Adrenal gland (tissue), 19 donors: ENCODE measurements at regions of chr16 and their contacts with region 1.

Region 1: GRCh38 chr16:63361032-63361624 is 1324.9 kb upstream of the CDH8 start:
- DNase-seq: peak in 1 of 7 donors; percentile 10
- H3K4me3 ChIP-seq: no peak overlapping the region
- H3K27ac ChIP-seq: no peak overlapping the region
- H3K4me1 ChIP-seq: no peaks in the 10 kb centered on the region
- H3K27me3 ChIP-seq: no peaks in the 10 kb centered on the region
- CTCF ChIP-seq: peak; percentile 52 to 73 (median 59)
- POLR2A ChIP-seq: no peak

Region 2: GRCh38 chr16:63373744-63374143 is 12.6 kb after region 1 on chr16:
- intact Hi-C with region 1: no loop called
- DNase-seq: no peak
- H3K4me3 ChIP-seq: no peak overlapping the region
- H3K27ac ChIP-seq: no peak overlapping the region
- H3K4me1 ChIP-seq: no peaks in the 10 kb centered on the region
- H3K27me3 ChIP-seq: no peaks in the 10 kb centered on the region
- CTCF ChIP-seq: no peak
- POLR2A ChIP-seq: no peak

Region 3: DNA sequence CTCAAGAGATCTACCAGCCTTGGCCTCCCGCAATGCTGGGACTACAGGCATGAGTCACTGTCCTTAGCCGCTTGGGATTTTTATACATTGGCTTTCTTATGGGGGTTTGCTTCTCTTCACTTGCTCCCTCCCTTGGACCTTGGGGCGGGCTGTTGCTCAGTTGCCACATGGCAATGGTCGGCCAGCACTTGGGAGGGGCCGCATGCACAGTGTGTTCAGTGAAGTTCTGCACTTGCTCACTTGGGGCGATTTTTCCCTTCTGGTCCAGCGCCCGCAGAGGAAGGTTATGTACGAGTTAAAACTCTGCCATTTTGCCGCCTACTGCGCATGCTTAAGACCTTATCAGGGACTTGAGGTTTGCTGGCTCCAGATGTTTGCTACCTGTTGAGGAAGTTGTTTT is 42.7 kb after region 1 on chr16:
- intact Hi-C with region 1: no loop called
- DNase-seq: no peak
- H3K4me3 ChIP-seq: no peak overlapping the region
- H3K27ac ChIP-seq: no peak overlapping the region
- H3K4me1 ChIP-seq: no peaks in the 10 kb centered on the region
- H3K27me3 ChIP-seq: no peaks in the 10 kb centered on the region
- CTCF ChIP-seq: no peak
- POLR2A ChIP-seq: no peak

Region 4: GRCh38 chr16:63422715-63423114 is 61.6 kb after region 1 on chr16:
- intact Hi-C with region 1: no loop called
- DNase-seq: no peak
- H3K4me3 ChIP-seq: no peak overlapping the region
- H3K27ac ChIP-seq: no peak overlapping the region
- H3K4me1 ChIP-seq: no peaks in the 10 kb centered on the region
- H3K27me3 ChIP-seq: no peaks in the 10 kb centered on the region
- CTCF ChIP-seq: no peak
- POLR2A ChIP-seq: no peak

Region 5: GRCh38 chr16:63447121-63447520 is 86.0 kb after region 1 on chr16:
- intact Hi-C with region 1: no loop called
- DNase-seq: no peak
- H3K4me3 ChIP-seq: no peak overlapping the region
- H3K27ac ChIP-seq: no peak overlapping the region
- H3K4me1 ChIP-seq: no peaks in the 10 kb centered on the region
- H3K27me3 ChIP-seq: no peaks in the 10 kb centered on the region
- CTCF ChIP-seq: no peak
- POLR2A ChIP-seq: no peak

Region 6: GRCh38 chr16:65117811-65118448 is 1756.8 kb after region 1 on chr16:
- intact Hi-C with region 1: loop called in 1 of 2 experiments (anchors 10 kb)
- DNase-seq: peak; percentile 63 to 89 (median 73)
- H3K4me3 ChIP-seq: no peak overlapping the region
- H3K27ac ChIP-seq: peak overlapping the region in 1 of 5 donors; percentile 23
- H3K4me1 ChIP-seq: peaks cover 5 to 22% of the 10 kb centered on the region in 2 donors
- H3K27me3 ChIP-seq: peaks cover 13% of the 10 kb centered on the region
- CTCF ChIP-seq: peak; percentile 82 to 93 (median 88)
- POLR2A ChIP-seq: no peak